Transverse colon (tissue), 4 donors: ENCODE measurements at regions of chr7 and their contacts with region 1.

Region 1: GRCh38 chr7:151459726-151460473 is 20.0 kb upstream of the CRYGN start:
- DNase-seq: peak; percentile 87
- H3K4me3 ChIP-seq: peak overlapping the region in 2 of 4 donors; percentile 11 to 16
- H3K27ac ChIP-seq: peak overlapping the region; percentile 86 to 92 (median 88)
- H3K4me1 ChIP-seq: peaks cover 22 to 27% (median 24%) of the 10 kb centered on the region in 4 donors
- H3K27me3 ChIP-seq: no peaks in the 10 kb centered on the region
- CTCF ChIP-seq: peak in 3 of 5 experiments; percentile 11 to 26 (median 15)
- EP300 ChIP-seq: peak; percentile 94
- POLR2A ChIP-seq: peak; percentile 66

Region 2: DNA sequence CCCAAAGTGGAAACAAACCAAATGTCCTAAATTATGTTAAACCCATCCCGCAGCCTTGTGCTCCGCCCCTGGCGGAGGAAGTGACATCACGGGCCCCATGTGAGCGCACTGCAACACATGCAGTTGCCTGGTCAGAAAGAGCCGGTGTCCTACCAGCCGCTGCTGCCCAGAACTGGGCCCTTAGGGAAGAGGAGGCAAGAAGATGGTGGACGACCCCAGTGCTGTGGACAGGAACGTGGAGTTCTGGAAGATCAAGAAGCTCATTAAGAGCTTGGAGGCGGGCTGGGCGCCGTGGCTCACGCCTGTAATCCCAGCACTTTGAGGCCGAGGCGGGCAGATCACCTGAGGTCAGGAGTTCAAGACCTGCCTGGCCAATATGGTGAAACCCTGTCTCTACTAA is 41.8 kb after region 1 on chr7:
- in situ Hi-C with region 1: no loop called
- intact Hi-C with region 1: no loop called
- DNase-seq: no peak
- H3K4me3 ChIP-seq: no peak overlapping the region
- H3K27ac ChIP-seq: no peak overlapping the region
- H3K4me1 ChIP-seq: peaks cover 4 to 39% (median 12%) of the 10 kb centered on the region in 4 donors
- H3K27me3 ChIP-seq: no peaks in the 10 kb centered on the region
- CTCF ChIP-seq: no peak
- EP300 ChIP-seq: no peak
- POLR2A ChIP-seq: no peak

Region 3: GRCh38 chr7:151511946-151512345 is 52.0 kb after region 1 on chr7:
- in situ Hi-C with region 1: no loop called
- intact Hi-C with region 1: loop called (anchors 2 kb)
- DNase-seq: no peak
- H3K4me3 ChIP-seq: no peak overlapping the region
- H3K27ac ChIP-seq: peak overlapping the region in 3 of 4 donors; percentile 10 to 63 (median 20)
- H3K4me1 ChIP-seq: peaks cover 0 to 69% (median 29%) of the 10 kb centered on the region in 4 donors
- H3K27me3 ChIP-seq: no peaks in the 10 kb centered on the region
- CTCF ChIP-seq: no peak
- EP300 ChIP-seq: no peak
- POLR2A ChIP-seq: no peak